ENCODE measurements at regions of chr17 and their contacts with region 1.

Region 1: GRCh38 chr17:31487648-31488263 is 96.3 kb downstream of the RAB11FIP4 start:
- DNase-seq: peak; percentile 94
- H3K4me3 Mint-ChIP-seq: peak overlapping the region; percentile 80
- H3K27ac Mint-ChIP-seq: peak overlapping the region; percentile 66
- H3K4me1 Mint-ChIP-seq: peaks cover 48% of the 10 kb centered on the region
- H3K27me3 Mint-ChIP-seq: no peaks in the 10 kb centered on the region

Region 2: DNA sequence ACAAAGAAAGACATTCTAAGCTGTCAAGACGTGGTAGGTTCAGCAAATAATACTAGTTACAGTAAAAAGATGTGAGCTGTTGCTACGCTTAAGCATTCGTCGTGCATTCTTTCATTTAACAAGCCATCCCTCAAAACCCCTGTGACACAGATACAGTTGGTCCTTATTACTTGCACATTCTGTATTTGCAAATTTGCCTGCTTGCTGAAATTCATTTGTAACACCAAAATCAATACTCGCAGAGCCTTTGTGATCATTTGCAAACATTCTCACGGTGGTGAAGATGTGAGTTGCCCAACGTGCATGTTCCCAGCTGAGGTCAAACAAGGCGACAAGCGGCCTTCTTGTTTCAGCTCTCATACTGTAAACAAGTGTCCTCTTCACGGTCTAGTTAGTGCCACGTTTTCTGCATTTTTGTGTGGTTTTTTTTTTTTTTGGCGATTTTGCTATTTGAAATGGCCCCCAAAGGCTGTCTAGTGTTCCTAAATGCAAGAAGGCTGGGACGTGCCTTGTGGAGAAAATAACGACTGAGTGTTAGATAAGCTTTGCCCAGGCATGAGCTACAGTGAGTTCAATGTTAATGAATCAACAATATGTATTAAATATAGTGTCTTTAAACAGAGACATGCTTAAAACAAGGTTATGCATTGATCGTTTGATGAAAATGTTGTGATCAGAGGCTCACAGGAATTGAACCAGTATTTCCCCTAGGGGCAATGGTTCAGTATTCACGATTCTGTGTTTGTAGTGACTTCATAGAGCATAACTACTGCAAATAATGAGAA is 12.2 kb before region 1 on chr17:
- CTCF ChIA-PET with region 1: interaction called, 10 read pairs
- POLR2A ChIA-PET with region 1: no interaction called
- intact Hi-C with region 1: no loop called
- DNase-seq: no peak
- H3K4me3 Mint-ChIP-seq: no peak overlapping the region
- H3K27ac Mint-ChIP-seq: no peak overlapping the region
- H3K4me1 Mint-ChIP-seq: no peaks in the 10 kb centered on the region
- H3K27me3 Mint-ChIP-seq: peaks cover 1% of the 10 kb centered on the region

Region 3: DNA sequence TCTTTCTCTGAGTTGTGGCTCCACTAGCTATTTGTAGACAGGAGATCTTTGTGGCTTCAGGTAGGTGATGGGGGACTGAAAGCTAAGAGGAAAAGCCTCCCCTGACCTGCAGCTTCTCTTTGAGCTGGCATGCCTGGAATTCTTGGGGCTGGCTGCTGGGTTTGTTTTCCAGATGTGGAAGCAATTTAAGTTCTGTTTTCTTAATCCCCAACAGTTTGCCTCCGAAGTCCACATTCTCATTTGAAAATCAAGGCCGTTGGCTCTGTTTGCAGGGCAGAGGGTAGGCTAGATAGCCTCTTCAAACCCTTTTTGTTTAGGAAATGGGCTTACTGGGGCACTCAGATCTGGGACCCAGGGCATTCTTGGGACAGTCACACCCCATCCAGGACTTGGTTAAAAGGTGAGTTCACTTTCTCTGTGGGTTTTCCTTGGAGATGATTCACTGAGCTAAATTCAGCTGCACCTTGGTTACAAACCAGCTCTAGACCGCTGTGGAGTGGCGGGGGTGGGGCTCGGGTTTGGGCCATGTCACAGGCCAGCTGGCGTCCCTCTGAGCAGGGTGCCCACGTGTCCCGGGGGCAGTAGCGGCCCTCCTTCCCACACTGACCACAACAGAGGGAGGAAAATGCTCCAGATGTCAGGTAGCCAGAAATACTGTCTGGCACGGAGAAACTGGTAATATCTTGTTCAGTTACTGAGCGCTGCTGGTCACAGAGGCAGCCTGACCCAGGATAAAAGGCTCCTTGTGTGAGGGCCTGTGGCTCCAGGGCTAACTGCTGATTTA is 12.2 kb after region 1 on chr17:
- CTCF ChIA-PET with region 1: interaction called, 3 read pairs
- POLR2A ChIA-PET with region 1: interaction called, 12 read pairs
- intact Hi-C with region 1: no loop called
- DNase-seq: peak; percentile 69
- H3K4me3 Mint-ChIP-seq: no peak overlapping the region
- H3K27ac Mint-ChIP-seq: no peak overlapping the region
- H3K4me1 Mint-ChIP-seq: peaks cover 46% of the 10 kb centered on the region
- H3K27me3 Mint-ChIP-seq: no peaks in the 10 kb centered on the region

Region 4: GRCh38 chr17:31524926-31525800 is 37.4 kb after region 1 on chr17:
- CTCF ChIA-PET with region 1: interaction called, 7 read pairs
- POLR2A ChIA-PET with region 1: no interaction called
- intact Hi-C with region 1: loop called (anchors 5 kb)
- DNase-seq: peak; percentile 88
- H3K4me3 Mint-ChIP-seq: no peak overlapping the region
- H3K27ac Mint-ChIP-seq: no peak overlapping the region
- H3K4me1 Mint-ChIP-seq: no peaks in the 10 kb centered on the region
- H3K27me3 Mint-ChIP-seq: no peaks in the 10 kb centered on the region